ENCODE measurements at regions of chr10 and their contacts with region 1.

Region 1: DNA sequence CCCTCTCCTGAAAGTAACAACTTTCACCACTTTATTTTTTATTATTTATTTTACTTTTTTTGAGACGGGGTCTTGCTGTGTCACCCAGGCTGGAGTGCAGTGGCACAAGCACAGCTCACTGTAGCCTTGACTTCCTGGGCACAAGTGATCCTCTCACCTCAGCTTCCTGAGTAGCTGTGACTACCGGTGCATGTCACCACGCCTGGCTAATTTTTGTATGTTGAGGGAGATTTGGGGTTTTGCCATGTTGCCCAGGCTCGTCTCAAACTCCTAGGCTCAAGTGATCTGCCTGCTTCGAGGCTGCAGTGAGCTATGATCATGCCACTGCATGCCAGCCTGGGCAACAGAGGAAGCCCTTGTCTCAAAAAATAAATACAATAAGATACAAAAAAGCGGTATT is 14.9 kb upstream of the SLIT1 start:
- DNase-seq: no peak
- H3K4me3 ChIP-seq: no peak overlapping the region
- H3K27ac ChIP-seq: no peak overlapping the region
- H3K4me1 ChIP-seq: peaks cover 0 to 12% (median 5%) of the 10 kb centered on the region in 3 donors
- H3K27me3 ChIP-seq: peaks cover 0 to 61% (median under 1%) of the 10 kb centered on the region in 4 donors
- CTCF ChIP-seq: no peak
- POLR2A ChIP-seq: no peak

Region 2: GRCh38 chr10:97072851-97073665 is 127.6 kb before region 1 on chr10:
- intact Hi-C with region 1: loop called (anchors 10 kb)
- DNase-seq: no peak
- H3K4me3 ChIP-seq: no peak overlapping the region
- H3K27ac ChIP-seq: no peak overlapping the region
- H3K4me1 ChIP-seq: peaks cover 0 to 3% (median 0%) of the 10 kb centered on the region in 3 donors
- H3K27me3 ChIP-seq: peaks cover 0 to 90% (median 0%) of the 10 kb centered on the region in 4 donors
- CTCF ChIP-seq: peak; percentile 70 to 86 (median 82)
- POLR2A ChIP-seq: no peak